Posterior vena cava (tissue), 2 donors: ENCODE measurements at regions of chr6 and their contacts with region 1.

Region 1: GRCh38 chr6:162379757-162380409 is 347.7 kb downstream of the PRKN start:
- DNase-seq: no peak

Region 2: GRCh38 chr6:162363757-162364156 is 16.1 kb before region 1 on chr6:
- intact Hi-C with region 1: loop called in 1 of 2 experiments (anchors 1 kb)
- DNase-seq: no peak